ENCODE measurements at regions of chr6 and their contacts with region 1.

Region 1: GRCh38 chr6:50602292-50602691 is 111.0 kb upstream of the TFAP2D start:
- DNase-seq: peak in 1 of 7 donors; percentile 1
- H3K4me3 ChIP-seq: no peak overlapping the region
- H3K27ac ChIP-seq: no peak overlapping the region
- H3K4me1 ChIP-seq: no peaks in the 10 kb centered on the region
- H3K27me3 ChIP-seq: no peaks in the 10 kb centered on the region
- CTCF ChIP-seq: peak; percentile 50 to 81 (median 67)
- POLR2A ChIP-seq: no peak

Region 2: DNA sequence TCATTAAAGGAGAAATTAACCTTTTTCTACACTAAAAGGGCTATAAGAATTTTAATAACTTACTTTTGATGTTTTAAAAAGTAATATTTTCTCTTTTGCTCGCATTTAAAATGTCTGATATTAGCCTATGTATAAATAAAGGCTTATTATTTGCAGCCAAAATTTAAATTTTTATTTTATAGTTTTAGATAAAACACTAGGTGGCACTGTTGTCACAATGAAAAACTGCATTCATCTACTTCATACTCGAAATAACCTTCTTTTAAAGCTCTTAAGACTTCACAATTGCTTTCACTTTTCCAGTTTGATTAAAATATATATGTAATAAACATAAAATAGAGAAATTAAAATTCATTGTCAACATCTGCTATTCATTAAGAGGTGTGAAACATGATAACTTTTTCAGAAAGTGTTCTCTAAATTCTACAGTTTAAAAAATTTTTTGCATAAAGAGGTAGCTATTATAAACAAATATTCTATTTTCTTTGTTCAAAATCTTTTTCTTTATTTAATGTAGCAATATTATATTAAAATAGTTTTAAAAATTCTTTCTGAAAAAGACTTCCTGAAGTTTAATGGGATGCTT is 473.8 kb before region 1 on chr6:
- intact Hi-C with region 1: loop called in 1 of 2 experiments (anchors 5 kb)
- DNase-seq: no peak
- H3K4me3 ChIP-seq: no peak overlapping the region
- H3K27ac ChIP-seq: no peak overlapping the region
- H3K4me1 ChIP-seq: no peaks in the 10 kb centered on the region
- H3K27me3 ChIP-seq: no peaks in the 10 kb centered on the region
- CTCF ChIP-seq: peak; percentile 28 to 65 (median 44)
- POLR2A ChIP-seq: no peak

Region 3: DNA sequence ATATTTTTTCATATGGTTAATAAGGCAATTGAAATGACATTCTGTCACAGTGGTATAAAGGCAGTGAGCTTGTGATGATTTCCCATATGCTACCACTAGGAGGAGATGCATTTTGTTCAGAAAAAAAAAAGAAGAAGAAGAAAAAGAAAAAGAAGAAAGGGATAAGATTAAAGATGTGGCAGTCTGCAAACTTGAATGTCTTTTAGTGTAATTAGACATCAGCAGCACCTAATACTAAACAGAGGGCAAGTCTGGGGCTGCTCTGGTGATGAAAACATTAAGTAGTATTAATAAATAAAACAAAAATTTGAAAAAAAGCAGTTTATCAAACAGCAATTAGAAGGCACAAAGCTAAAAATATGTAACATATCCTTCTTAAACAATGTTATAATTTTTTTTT is 457.2 kb before region 1 on chr6:
- intact Hi-C with region 1: loop called in 1 of 2 experiments (anchors 10 kb)
- DNase-seq: no peak
- H3K4me3 ChIP-seq: no peak overlapping the region
- H3K27ac ChIP-seq: no peak overlapping the region
- H3K4me1 ChIP-seq: no peaks in the 10 kb centered on the region
- H3K27me3 ChIP-seq: no peaks in the 10 kb centered on the region
- CTCF ChIP-seq: peak in 5 of 6 experiments; percentile 10 to 49 (median 39)
- POLR2A ChIP-seq: no peak

Region 4: DNA sequence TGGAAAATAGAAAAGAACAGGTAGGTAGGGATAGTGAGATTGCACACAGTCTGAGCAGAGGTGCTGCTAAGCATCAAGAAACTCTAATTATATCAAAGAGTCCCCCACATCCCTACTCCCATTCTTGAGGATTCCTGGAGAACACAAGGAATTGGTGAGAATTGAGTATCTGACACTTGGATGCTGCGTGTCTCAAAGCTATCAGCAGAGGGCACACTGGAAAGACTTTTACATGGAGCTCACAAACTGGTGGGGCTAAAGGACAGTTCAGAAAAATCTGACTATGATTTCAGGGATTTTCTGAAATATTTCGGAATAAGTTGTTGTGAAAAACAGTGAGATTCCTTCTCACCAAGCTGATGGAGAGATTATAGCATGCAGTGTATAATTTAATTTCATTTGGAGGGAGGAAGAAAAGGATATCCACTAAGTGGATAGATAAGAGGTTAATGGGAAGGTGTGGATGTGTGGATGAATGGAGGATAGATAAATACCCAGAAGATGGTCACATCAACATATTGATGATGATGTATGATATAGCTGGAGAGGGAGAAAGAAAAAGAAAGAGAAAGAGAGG is 337.2 kb before region 1 on chr6:
- intact Hi-C with region 1: loop called in 1 of 2 experiments (anchors 10 kb)
- DNase-seq: peak in 6 of 7 donors; percentile 20 to 61 (median 31)
- H3K4me3 ChIP-seq: no peak overlapping the region
- H3K27ac ChIP-seq: no peak overlapping the region
- H3K4me1 ChIP-seq: no peaks in the 10 kb centered on the region
- H3K27me3 ChIP-seq: no peaks in the 10 kb centered on the region
- CTCF ChIP-seq: peak; percentile 17 to 63 (median 54)
- POLR2A ChIP-seq: no peak